Dorsolateral prefrontal cortex (tissue), 120 donors: ENCODE measurements at regions of chrX and their contacts with region 1.

Region 1: GRCh38 chrX:13898083-13898482 is 81.2 kb upstream of the GPM6B start:
- DNase-seq: peak in 2 of 10 donors; percentile 62 to 66
- H3K4me3 ChIP-seq: peak overlapping the region in 1 of 59 donors; percentile 6
- H3K27ac ChIP-seq: peak overlapping the region in 58 of 59 donors; percentile 29 to 96 (median 88)
- H3K27me3 ChIP-seq: peaks cover 0 to 82% (median 9%) of the 10 kb centered on the region in 45 donors
- CTCF ChIP-seq: peak in 52 of 56 donors; percentile 15 to 76 (median 52)

Region 2: DNA sequence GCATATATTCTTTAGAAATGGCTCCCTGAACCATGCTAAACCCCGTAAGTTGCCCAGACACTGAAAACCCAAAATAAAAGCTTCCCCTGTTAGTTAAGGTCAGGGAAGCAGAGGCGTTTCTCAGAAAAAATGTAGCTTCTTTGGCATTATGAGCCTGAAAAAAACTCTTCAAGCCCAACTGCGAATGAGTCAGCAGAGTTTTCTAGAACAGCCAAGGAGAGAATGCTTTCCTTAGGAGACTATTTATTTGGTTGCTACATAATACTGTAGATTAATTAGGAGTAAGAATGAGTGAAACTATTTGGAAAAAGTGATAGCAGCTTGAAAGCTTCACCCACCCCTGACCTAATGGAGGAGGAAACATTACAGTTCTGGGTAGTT is 524.3 kb before region 1 on chrX:
- intact Hi-C with region 1: no loop called
- DNase-seq: no peak
- H3K4me3 ChIP-seq: no peak overlapping the region
- H3K27ac ChIP-seq: no peak overlapping the region
- H3K27me3 ChIP-seq: peaks cover 0 to 51% (median 9%) of the 10 kb centered on the region in 45 donors
- CTCF ChIP-seq: no peak

Region 3: DNA sequence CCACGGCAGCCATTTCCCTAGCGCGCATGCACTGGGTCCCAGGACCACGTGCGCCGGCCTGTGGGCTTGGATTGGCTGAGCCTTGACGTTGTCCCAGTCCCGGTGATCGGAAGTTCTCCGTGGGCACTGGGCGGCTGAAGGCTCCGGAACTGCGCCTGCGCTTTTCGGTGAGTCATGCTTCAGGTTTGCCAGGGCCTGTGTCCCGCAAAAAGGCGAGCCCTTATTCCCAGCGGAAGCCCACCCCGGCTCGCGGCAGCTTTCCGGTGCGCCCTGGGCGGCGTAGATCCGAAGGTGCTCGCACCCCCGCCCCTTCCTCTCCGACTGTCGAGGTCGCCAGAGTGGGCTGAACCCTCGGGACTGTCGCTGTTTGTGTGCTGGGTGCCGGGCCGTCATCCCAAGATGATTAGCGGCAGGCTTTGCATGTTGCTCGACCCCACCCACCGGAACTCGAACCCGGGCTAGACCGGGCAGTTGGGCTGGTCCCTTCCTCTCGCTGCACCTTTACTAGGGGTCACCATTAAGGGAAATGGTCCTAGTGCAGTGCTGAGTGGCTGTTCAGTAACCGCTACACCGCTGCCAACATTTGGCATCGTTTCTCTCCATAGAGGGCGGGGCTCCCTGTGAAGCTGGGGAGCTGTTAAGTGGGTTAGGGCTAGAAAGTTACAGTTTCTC is 244.9 kb before region 1 on chrX and contains the start of gene TCEANC:
- intact Hi-C with region 1: loop called in 1 of 2 experiments (anchors 10 kb)
- DNase-seq: peak; percentile 89 to 96 (median 94)
- H3K4me3 ChIP-seq: peak within 1 kb of the TSS; percentile 45 to 91 (median 70)
- H3K27ac ChIP-seq: peak within 1 kb of the TSS in 58 of 59 donors; percentile 38 to 96 (median 89)
- H3K27me3 ChIP-seq: peaks cover 0 to 34% (median 0%) of the 10 kb centered on the region in 45 donors
- CTCF ChIP-seq: peak in 11 of 56 donors; percentile 3 to 47 (median 8)
- total RNA-seq, gene TCEANC: 4.4 to 17.2 (median 8.8) TPM

Region 4: GRCh38 chrX:13666836-13667235 is 231.2 kb before region 1 on chrX:
- intact Hi-C with region 1: no loop called
- DNase-seq: peak in 9 of 10 donors; percentile 31 to 79 (median 46)
- H3K4me3 ChIP-seq: no peak overlapping the region
- H3K27ac ChIP-seq: peak overlapping the region in 44 of 59 donors; percentile 10 to 84 (median 58)
- H3K27me3 ChIP-seq: peaks cover 0 to 64% (median 11%) of the 10 kb centered on the region in 45 donors
- CTCF ChIP-seq: peak in 2 of 56 donors; percentile 15 to 20

Region 5: DNA sequence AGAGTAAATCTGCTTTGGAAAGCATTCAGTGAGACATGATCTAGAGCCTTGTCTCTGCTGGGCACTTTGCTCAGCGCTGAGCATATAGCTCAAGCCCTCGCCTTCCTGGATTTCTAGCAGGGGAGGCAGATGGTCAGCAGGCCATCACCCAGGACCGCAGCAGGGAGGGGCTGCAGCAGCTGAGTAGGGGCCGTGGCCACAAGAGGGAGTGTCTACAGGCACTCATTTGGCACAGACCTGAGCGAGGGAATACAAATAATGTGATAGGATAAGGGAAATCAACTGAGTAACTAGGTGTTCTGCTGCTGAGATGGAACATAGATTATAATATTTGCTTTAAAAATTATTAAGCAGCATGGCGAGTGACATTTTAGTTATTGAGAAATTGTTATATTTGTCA is 133.3 kb before region 1 on chrX:
- intact Hi-C with region 1: loop called in 1 of 2 experiments (anchors 10 kb)
- DNase-seq: peak in 5 of 10 donors; percentile 33 to 72 (median 49)
- H3K4me3 ChIP-seq: peak overlapping the region in 7 of 59 donors; percentile 0 to 37 (median 26)
- H3K27ac ChIP-seq: peak overlapping the region; percentile 9 to 90 (median 78)
- H3K27me3 ChIP-seq: peaks cover 0 to 54% (median 5%) of the 10 kb centered on the region in 45 donors
- CTCF ChIP-seq: peak in 49 of 56 donors; percentile 18 to 67 (median 46)

Region 6: GRCh38 chrX:13851996-13852695 is 45.9 kb before region 1 on chrX:
- intact Hi-C with region 1: no loop called
- DNase-seq: no peak
- H3K4me3 ChIP-seq: no peak overlapping the region
- H3K27ac ChIP-seq: peak overlapping the region in 16 of 59 donors; percentile 8 to 71 (median 21)
- H3K27me3 ChIP-seq: peaks cover 0 to 59% (median 14%) of the 10 kb centered on the region in 45 donors
- CTCF ChIP-seq: peak in 7 of 56 donors; percentile 7 to 30 (median 11)

Region 7: GRCh38 chrX:13938051-13938828 is 40.2 kb after region 1 on chrX:
- intact Hi-C with region 1: loop called in 1 of 2 experiments (anchors 5 kb)
- DNase-seq: peak in 6 of 10 donors; percentile 33 to 66 (median 40)
- H3K4me3 ChIP-seq: peak overlapping the region; percentile 39 to 82 (median 70)
- H3K27ac ChIP-seq: peak overlapping the region; percentile 51 to 98 (median 94)
- H3K27me3 ChIP-seq: peaks cover 0 to 88% (median 48%) of the 10 kb centered on the region in 45 donors
- CTCF ChIP-seq: peak in 2 of 56 donors; percentile 11 to 14

Region 8: DNA sequence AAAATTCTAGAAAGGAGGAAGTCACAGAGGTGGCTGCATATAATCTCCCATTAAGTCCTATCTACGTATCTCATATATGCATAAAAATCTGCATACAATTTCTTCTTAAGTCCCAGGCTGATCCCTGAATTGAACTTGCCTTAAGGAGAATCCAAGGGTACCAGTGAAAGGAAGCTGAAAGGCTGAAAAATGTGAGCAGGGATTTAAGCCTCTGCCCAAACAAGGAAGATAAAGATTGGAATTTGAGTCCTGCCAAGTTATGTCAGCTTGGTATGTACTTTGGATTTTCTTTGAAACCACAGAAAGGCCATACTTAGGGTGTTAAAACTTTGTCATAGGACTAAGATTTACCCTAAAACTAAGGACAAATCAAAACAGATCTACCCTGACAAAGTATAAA is 158.1 kb after region 1 on chrX:
- intact Hi-C with region 1: no loop called
- DNase-seq: no peak
- H3K4me3 ChIP-seq: no peak overlapping the region
- H3K27ac ChIP-seq: no peak overlapping the region
- H3K27me3 ChIP-seq: peaks cover 0 to 89% (median 45%) of the 10 kb centered on the region in 45 donors
- CTCF ChIP-seq: no peak